Panc1 (cell line): ENCODE measurements at regions of chr4 and their contacts with region 1.

Region 1: GRCh38 chr4:185597532-185598188 is 62.4 kb upstream of the PDLIM3 start:
- DNase-seq: peak; percentile 69
- ATAC-seq: peak; percentile 70; the same call in 1 of the 2 replicates
- H3K4me3 ChIP-seq: no peak overlapping the region
- H3K27ac ChIP-seq: no peak overlapping the region
- H3K4me1 ChIP-seq: no peaks in the 10 kb centered on the region
- H3K27me3 ChIP-seq: no peaks in the 10 kb centered on the region
- CTCF ChIP-seq: peak; percentile 94

Region 2: DNA sequence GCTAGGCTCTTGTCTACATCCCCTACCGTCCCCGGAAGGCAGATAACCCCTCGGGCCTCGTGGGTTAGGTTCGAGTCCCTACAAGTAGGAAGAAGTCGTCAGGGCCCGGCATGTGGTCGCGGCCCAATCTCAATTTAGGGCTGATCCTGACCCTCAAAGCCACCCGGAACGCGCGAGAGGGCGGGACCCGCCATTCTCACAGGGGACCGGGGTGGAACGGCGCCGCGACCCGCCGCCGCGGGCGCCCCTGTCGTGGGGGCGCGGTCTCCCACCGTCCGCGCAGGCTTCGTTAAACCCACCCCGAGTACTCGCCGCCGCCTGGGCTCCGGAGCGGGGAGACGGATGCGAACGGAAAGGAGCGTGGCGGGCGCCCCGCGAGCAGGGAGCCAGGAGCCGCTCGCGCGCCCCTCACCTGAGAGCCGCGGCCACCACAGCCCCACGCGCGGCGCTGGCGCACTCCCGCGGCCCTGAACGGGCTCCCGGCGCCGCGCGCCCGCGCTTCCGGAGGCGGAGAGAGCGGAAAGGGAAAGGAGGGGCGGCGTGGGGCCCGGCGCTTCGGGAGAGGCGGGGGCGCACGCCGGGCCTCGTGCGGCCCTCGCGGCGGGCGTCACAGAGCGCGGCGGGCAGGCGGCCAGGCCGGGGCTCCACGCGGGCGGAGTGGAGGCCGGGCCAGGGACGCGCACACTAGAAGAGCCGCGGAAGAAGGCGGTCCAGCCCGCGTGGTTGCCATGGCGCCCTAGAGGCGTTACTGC is 394.0 kb before region 1 on chr4 and contains the start of gene CFAP97:
- CTCF ChIA-PET with region 1: no interaction called
- POLR2A ChIA-PET with region 1: no interaction called
- in situ Hi-C with region 1: no loop called
- intact Hi-C with region 1: loop called (anchors 10 kb)
- DNase-seq: no peak
- ATAC-seq: peak; percentile 93
- H3K4me3 ChIP-seq: peak within 1 kb of the TSS; percentile 61 to 82
- H3K27ac ChIP-seq: peak within 1 kb of the TSS; percentile 82
- H3K4me1 ChIP-seq: peaks cover 17% of the 10 kb centered on the region
- H3K27me3 ChIP-seq: no peaks in the 10 kb centered on the region
- CTCF ChIP-seq: no peak
- total RNA-seq, gene CFAP97: 39.0 TPM

Region 3: GRCh38 chr4:185471235-185472102 is 126.2 kb before region 1 on chr4 and contains the start of gene CCDC110:
- CTCF ChIA-PET with region 1: no interaction called
- POLR2A ChIA-PET with region 1: no interaction called
- in situ Hi-C with region 1: no loop called
- intact Hi-C with region 1: loop called (anchors 5 kb)
- DNase-seq: no peak
- ATAC-seq: peak; percentile 96
- H3K4me3 ChIP-seq: peak within 1 kb of the TSS; percentile 56 to 70
- H3K27ac ChIP-seq: no peak within 1 kb of the TSS
- H3K4me1 ChIP-seq: no peaks in the 10 kb centered on the region
- H3K27me3 ChIP-seq: peaks cover 3% of the 10 kb centered on the region
- CTCF ChIP-seq: peak; percentile 76
- total RNA-seq, gene CCDC110: 0.05 TPM

Region 4: GRCh38 chr4:186719925-186720694 is 1122.5 kb after region 1 on chr4:
- CTCF ChIA-PET with region 1: no interaction called
- POLR2A ChIA-PET with region 1: no interaction called
- in situ Hi-C with region 1: no loop called
- intact Hi-C with region 1: no loop called
- DNase-seq: no peak
- ATAC-seq: no peak
- H3K4me3 ChIP-seq: no peak overlapping the region
- H3K27ac ChIP-seq: peak overlapping the region; percentile 95
- H3K4me1 ChIP-seq: peaks cover 45% of the 10 kb centered on the region
- H3K27me3 ChIP-seq: no peaks in the 10 kb centered on the region
- CTCF ChIP-seq: peak; percentile 29; the same call in 1 of the 2 replicates